ENCODE measurements at regions of chr4 and their contacts with region 1.

Region 1: DNA sequence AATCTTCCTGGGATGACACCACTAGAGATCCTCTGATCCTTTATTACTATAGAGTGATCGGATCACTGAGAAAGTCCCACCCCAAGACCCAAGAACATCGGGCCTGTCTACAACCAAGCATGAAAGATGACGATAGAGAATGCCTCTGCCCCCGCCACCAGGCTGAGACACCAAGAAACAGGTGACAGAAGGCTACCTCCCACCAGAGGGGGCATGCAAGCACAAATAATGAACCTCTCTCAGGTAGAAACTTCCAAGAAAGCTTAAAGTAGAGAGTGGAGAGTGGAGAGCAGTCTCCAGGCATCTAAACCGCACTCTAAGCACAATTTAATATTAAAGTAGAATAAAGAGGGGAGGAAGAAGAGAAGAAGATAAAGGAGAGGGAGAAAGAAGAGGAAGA is 402.6 kb downstream of the INPP4B start:
- DNase-seq: peak in 1 of 2 experiments; percentile 16
- H3K4me3 ChIP-seq: no peak overlapping the region
- H3K4me3 Mint-ChIP-seq: no peak overlapping the region
- H3K27ac Mint-ChIP-seq: no peak overlapping the region
- H3K4me1 ChIP-seq: no peaks in the 10 kb centered on the region
- H3K4me1 Mint-ChIP-seq: peaks cover 7% of the 10 kb centered on the region
- H3K27me3 ChIP-seq: no peaks in the 10 kb centered on the region
- H3K27me3 Mint-ChIP-seq: no peaks in the 10 kb centered on the region
- CTCF ChIP-seq: peak in 1 of 2 experiments; percentile 32

Region 2: GRCh38 chr4:142262956-142263355 is 180.5 kb before region 1 on chr4:
- CTCF ChIA-PET with region 1: no interaction called
- POLR2A ChIA-PET with region 1: no interaction called
- intact Hi-C with region 1: no loop called
- DNase-seq: no peak
- H3K4me3 ChIP-seq: no peak overlapping the region
- H3K4me3 Mint-ChIP-seq: no peak overlapping the region
- H3K27ac Mint-ChIP-seq: no peak overlapping the region
- H3K4me1 ChIP-seq: no peaks in the 10 kb centered on the region; the same call in 1 of the 2 replicates
- H3K4me1 Mint-ChIP-seq: no peaks in the 10 kb centered on the region
- H3K27me3 ChIP-seq: no peaks in the 10 kb centered on the region
- H3K27me3 Mint-ChIP-seq: no peaks in the 10 kb centered on the region
- CTCF ChIP-seq: no peak

Region 3: GRCh38 chr4:142353149-142353738 is 90.2 kb before region 1 on chr4:
- CTCF ChIA-PET with region 1: no interaction called
- POLR2A ChIA-PET with region 1: no interaction called
- intact Hi-C with region 1: no loop called
- DNase-seq: peak in 1 of 2 experiments; percentile 36
- H3K4me3 ChIP-seq: no peak overlapping the region
- H3K4me3 Mint-ChIP-seq: no peak overlapping the region
- H3K27ac Mint-ChIP-seq: no peak overlapping the region
- H3K4me1 ChIP-seq: peaks cover 77% of the 10 kb centered on the region
- H3K4me1 Mint-ChIP-seq: peaks cover 25% of the 10 kb centered on the region
- H3K27me3 ChIP-seq: no peaks in the 10 kb centered on the region
- H3K27me3 Mint-ChIP-seq: no peaks in the 10 kb centered on the region
- CTCF ChIP-seq: peak; percentile 61 to 67

Region 4: GRCh38 chr4:142458831-142459422 is 15.5 kb after region 1 on chr4:
- CTCF ChIA-PET with region 1: no interaction called
- POLR2A ChIA-PET with region 1: no interaction called
- intact Hi-C with region 1: no loop called
- DNase-seq: no peak
- H3K4me3 ChIP-seq: no peak overlapping the region
- H3K4me3 Mint-ChIP-seq: no peak overlapping the region
- H3K27ac Mint-ChIP-seq: no peak overlapping the region
- H3K4me1 ChIP-seq: no peaks in the 10 kb centered on the region
- H3K4me1 Mint-ChIP-seq: peaks cover 8% of the 10 kb centered on the region
- H3K27me3 ChIP-seq: no peaks in the 10 kb centered on the region
- H3K27me3 Mint-ChIP-seq: no peaks in the 10 kb centered on the region
- CTCF ChIP-seq: no peak

Region 5: GRCh38 chr4:142719854-142720541 is 276.5 kb after region 1 on chr4:
- CTCF ChIA-PET with region 1: interaction called, 4 read pairs
- POLR2A ChIA-PET with region 1: no interaction called
- intact Hi-C with region 1: loop called (anchors 1 kb)
- DNase-seq: peak in 1 of 2 experiments; percentile 21
- H3K4me3 ChIP-seq: no peak overlapping the region
- H3K4me3 Mint-ChIP-seq: no peak overlapping the region
- H3K27ac Mint-ChIP-seq: no peak overlapping the region
- H3K4me1 ChIP-seq: no peaks in the 10 kb centered on the region
- H3K4me1 Mint-ChIP-seq: no peaks in the 10 kb centered on the region
- H3K27me3 ChIP-seq: no peaks in the 10 kb centered on the region
- H3K27me3 Mint-ChIP-seq: no peaks in the 10 kb centered on the region
- CTCF ChIP-seq: peak in 1 of 2 experiments; percentile 37

Region 6: DNA sequence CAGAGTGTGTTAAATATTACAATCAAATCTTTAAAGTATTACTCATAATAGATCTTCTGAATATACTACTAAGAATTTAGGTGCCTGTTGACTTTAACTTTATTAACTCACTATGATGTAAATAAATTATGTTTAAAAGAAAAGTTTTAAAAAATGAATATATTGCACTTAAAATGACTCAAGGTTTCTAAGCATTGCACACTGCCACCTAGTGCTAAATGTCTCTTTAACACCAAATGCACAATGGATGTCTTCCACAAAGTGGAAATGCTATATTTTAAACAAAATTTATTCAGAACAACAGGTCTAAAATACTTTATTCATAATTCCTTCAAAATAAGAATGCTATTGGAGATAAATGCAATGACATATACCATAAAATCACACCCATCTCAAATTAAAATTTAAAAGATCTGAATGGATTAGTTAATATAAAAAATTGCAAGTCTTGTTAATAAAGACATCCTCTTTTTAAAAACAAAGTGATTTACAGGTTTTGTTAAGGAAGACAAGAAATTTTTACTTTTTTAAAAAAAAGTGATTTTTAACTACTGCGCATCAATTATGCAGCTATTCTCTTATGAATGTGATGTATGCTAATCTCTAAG is 397.2 kb after region 1 on chr4:
- CTCF ChIA-PET with region 1: no interaction called
- POLR2A ChIA-PET with region 1: no interaction called
- intact Hi-C with region 1: loop called (anchors 1 kb)
- DNase-seq: no peak
- H3K4me3 ChIP-seq: no peak overlapping the region
- H3K4me3 Mint-ChIP-seq: no peak overlapping the region
- H3K27ac Mint-ChIP-seq: no peak overlapping the region
- H3K4me1 ChIP-seq: no peaks in the 10 kb centered on the region
- H3K4me1 Mint-ChIP-seq: no peaks in the 10 kb centered on the region
- H3K27me3 ChIP-seq: no peaks in the 10 kb centered on the region
- H3K27me3 Mint-ChIP-seq: peaks cover 12% of the 10 kb centered on the region
- CTCF ChIP-seq: peak; percentile 56 to 58

Measured in Caco-2 (cell line).